ENCODE measurements at regions of chr7 and their contacts with region 1.

Region 1: DNA sequence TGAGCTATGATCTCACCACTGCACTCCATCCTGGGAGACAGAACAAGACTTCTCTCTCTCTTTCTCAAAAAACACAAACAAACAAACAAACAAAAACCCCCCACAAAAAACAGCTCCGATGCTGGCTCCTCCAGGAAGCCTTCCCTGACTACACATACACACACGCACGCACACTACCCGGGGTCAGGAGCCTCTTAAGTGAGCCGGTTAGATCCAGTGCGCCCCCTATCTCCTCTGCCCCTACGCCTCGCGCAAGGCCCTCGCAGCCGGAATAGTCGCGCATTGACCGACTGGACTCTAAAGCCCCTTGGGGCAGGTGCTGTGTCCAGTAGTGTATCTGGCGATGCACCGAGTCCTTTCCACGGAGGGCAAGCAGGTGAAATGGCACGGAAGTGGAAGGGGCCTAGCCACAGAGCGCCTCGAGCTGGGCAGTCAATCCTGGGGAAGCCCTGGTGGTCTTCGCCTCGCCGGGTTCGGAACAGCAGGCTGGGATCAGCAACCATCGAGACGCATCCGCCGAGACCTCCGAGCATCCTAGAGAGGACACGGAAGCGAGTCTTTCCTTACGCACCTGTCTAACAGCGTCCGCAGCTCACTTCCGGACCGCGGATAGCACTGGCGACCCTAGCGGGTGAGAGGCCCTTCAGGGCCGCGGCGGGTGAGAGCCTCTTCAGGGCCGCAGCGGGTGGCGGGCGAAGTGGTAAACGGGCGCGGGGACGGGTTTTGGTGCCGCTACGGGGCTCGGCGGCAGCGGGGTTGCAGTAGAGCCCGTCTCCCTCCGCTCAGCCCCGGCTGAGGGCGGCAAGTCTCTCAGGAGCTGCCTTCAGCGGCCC is at the start of gene ZSCAN25:
- DNase-seq: peak; percentile 96 to 97
- ATAC-seq: peak; percentile 97 to 98
- H3K4me3 ChIP-seq: peak within 1 kb of the TSS; percentile 85
- H3K27ac ChIP-seq: peak within 1 kb of the TSS; percentile 92 to 95
- H3K4me1 ChIP-seq: peaks cover 20% of the 10 kb centered on the region
- CTCF ChIP-seq: peak; percentile 67
- EP300 ChIP-seq: no peak
- POLR2A ChIP-seq: peak; percentile 69
- RAD21 ChIP-seq: peak; percentile 67 to 69
- polyA plus RNA-seq, gene ZSCAN25: 9.3 and 10.1 TPM in 2 replicates

Region 2: DNA sequence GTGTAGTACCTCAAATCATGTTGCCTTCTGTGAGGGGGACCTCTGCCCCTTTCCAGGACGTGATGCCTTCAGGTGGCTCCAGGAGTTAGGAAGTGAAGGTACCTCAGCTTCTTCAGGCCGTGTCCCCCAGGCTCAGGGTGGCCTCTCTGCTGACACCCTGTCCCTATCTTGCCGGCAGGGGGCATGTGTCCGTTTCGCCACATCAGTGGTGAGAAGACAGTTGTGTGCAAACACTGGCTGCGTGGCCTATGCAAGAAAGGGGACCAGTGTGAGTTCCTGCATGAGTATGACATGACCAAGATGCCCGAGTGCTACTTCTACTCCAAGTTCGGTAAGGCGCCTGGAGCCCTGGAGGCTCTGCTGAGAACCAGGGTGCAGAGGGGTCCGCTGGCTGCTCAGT is 168.6 kb before region 1 on chr7:
- CTCF ChIA-PET with region 1: interaction called, 12 read pairs
- POLR2A ChIA-PET with region 1: no interaction called
- DNase-seq: peak; percentile 59 to 60
- ATAC-seq: peak; percentile 80 to 88; a peak in 5 of 6 replicates
- H3K4me3 ChIP-seq: no peak overlapping the region
- H3K27ac ChIP-seq: no peak overlapping the region
- H3K4me1 ChIP-seq: no peaks in the 10 kb centered on the region
- CTCF ChIP-seq: peak; percentile 36
- EP300 ChIP-seq: no peak
- POLR2A ChIP-seq: no peak
- RAD21 ChIP-seq: peak; percentile 27 to 37; a peak in 3 of 5 replicates

Region 3: GRCh38 chr7:99504603-99505323 is 111.8 kb before region 1 on chr7 and contains the start of gene ZKSCAN5:
- CTCF ChIA-PET with region 1: interaction called, 5 read pairs
- POLR2A ChIA-PET with region 1: interaction called, 11 read pairs
- DNase-seq: peak; percentile 98
- ATAC-seq: peak; percentile 88 to 94
- H3K4me3 ChIP-seq: peak within 1 kb of the TSS; percentile 95
- H3K27ac ChIP-seq: peak within 1 kb of the TSS; percentile 94 to 97
- H3K4me1 ChIP-seq: peaks cover 16% of the 10 kb centered on the region; the same call in 2 of the 3 replicates
- CTCF ChIP-seq: no peak
- EP300 ChIP-seq: no peak
- POLR2A ChIP-seq: peak; percentile 86
- RAD21 ChIP-seq: no peak
- polyA plus RNA-seq, gene ZKSCAN5: 14.1 and 15.7 TPM in 2 replicates

Region 4: GRCh38 chr7:99558306-99559174 is 58.0 kb before region 1 on chr7 and contains the start of gene ZNF655:
- CTCF ChIA-PET with region 1: interaction called, 14 read pairs
- POLR2A ChIA-PET with region 1: interaction called, 20 read pairs
- DNase-seq: peak; percentile 94 to 98
- ATAC-seq: peak; percentile 92
- H3K4me3 ChIP-seq: peak within 1 kb of the TSS; percentile 92
- H3K27ac ChIP-seq: peak within 1 kb of the TSS; percentile 91 to 96
- H3K4me1 ChIP-seq: peaks cover 44% of the 10 kb centered on the region
- CTCF ChIP-seq: no peak
- EP300 ChIP-seq: no peak
- POLR2A ChIP-seq: peak; percentile 70
- RAD21 ChIP-seq: no peak
- polyA plus RNA-seq, gene ZNF655: 78.4 and 85.1 TPM in 2 replicates

Region 5: DNA sequence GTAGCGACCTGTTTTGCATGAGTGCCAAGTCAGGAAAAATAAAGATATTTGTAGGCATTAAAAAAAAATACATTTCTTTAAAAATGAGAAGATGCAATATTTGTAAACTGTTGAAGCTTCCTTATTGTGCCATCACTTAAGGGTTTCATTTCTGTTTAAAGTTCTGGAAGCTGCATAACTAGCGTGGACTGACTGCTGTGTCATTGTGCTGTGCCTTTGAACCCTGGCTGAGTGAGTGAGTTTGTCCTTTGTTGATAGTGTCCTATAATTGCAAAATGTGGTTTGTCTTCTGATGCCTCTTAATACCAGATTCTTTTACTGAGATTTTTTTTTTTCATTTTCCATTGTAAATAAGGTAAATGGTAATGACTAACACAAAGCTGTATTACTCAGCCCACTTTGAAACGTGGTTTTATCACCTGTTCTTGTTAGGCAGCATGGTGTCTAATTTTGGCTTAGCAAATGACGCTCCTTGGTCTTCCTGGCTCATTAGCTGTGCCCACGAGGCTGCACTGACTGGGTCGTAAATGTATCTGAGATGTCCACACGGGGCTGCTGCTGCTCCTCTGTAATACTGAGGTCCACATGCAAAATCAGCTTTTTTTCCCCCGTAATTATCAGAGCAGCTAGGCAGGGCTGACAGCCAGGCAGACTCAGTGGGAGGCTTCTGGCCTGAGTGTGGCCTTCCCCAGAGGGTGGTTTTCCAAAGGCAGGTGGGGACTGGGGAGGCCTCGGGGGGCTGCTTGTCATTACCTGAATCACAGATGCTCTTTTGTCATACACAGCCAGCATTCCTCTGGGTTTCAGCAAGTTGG is 14.9 kb after region 1 on chr7:
- CTCF ChIA-PET with region 1: interaction called, 13 read pairs
- POLR2A ChIA-PET with region 1: interaction called, 11 read pairs
- DNase-seq: peak; percentile 48 to 56
- ATAC-seq: peak; percentile 86 to 87
- H3K4me3 ChIP-seq: no peak overlapping the region
- H3K27ac ChIP-seq: peak overlapping the region in 1 of 2 experiments; percentile 15; a peak in 2 of 6 replicates
- H3K4me1 ChIP-seq: no peaks in the 10 kb centered on the region
- CTCF ChIP-seq: peak; percentile 63
- EP300 ChIP-seq: no peak
- POLR2A ChIP-seq: no peak
- RAD21 ChIP-seq: peak; percentile 83 to 87

Region 6: DNA sequence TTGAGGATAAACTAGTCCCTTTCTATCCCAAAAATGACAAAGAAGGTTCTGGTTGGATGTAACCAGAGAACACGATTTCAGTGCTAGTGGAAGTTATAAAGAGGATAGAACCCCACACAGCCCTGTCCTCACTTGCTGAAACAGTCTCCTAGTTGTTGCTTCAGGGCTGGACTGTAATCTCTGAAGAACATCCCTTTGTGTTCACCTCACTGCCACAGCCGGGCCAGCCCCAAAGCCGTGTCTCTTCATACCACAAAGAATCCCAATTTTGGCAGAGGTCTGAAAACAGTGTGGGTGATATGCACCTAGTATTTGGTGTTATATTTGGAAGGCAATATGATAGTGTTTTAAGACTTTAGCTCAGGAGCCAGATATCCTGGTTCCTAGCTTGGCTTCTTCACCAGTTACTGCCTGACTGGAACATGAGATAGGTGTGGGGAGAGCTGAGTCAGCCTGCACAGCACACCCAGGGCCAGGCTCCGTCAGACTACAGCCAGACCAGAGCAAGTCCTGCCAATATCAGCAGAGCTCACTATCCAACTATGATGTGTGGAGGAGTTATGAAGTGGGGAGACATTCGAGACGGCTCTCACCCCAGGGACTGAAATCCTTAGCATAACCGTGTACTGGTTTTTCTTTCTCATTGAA is 146.2 kb after region 1 on chr7:
- CTCF ChIA-PET with region 1: no interaction called
- POLR2A ChIA-PET with region 1: no interaction called
- DNase-seq: no peak
- ATAC-seq: no peak
- H3K4me3 ChIP-seq: no peak overlapping the region
- H3K27ac ChIP-seq: no peak overlapping the region
- H3K4me1 ChIP-seq: no peaks in the 10 kb centered on the region
- CTCF ChIP-seq: no peak
- EP300 ChIP-seq: no peak
- POLR2A ChIP-seq: no peak
- RAD21 ChIP-seq: no peak

Region 7: GRCh38 chr7:99918959-99919813 is 302.6 kb after region 1 on chr7 and contains the start of gene TRIM4:
- CTCF ChIA-PET with region 1: interaction called, 3 read pairs
- POLR2A ChIA-PET with region 1: interaction called, 13 read pairs
- DNase-seq: peak; percentile 92 to 95
- ATAC-seq: peak; percentile 98 to 100
- H3K4me3 ChIP-seq: peak within 1 kb of the TSS; percentile 81
- H3K27ac ChIP-seq: peak within 1 kb of the TSS; percentile 90 to 98
- H3K4me1 ChIP-seq: peaks cover 13% of the 10 kb centered on the region; the same call in 2 of the 3 replicates
- CTCF ChIP-seq: peak; percentile 9; the same call in 1 of the 3 replicates
- EP300 ChIP-seq: no peak
- POLR2A ChIP-seq: peak; percentile 72
- RAD21 ChIP-seq: peak in 1 of 2 experiments; percentile 29; a peak in 1 of 5 replicates
- polyA plus RNA-seq, gene TRIM4: 33.8 and 34.3 TPM in 2 replicates

Measured in A549 (cell line).